ENCODE measurements at regions of chr1 and their contacts with region 1.

Region 1: DNA sequence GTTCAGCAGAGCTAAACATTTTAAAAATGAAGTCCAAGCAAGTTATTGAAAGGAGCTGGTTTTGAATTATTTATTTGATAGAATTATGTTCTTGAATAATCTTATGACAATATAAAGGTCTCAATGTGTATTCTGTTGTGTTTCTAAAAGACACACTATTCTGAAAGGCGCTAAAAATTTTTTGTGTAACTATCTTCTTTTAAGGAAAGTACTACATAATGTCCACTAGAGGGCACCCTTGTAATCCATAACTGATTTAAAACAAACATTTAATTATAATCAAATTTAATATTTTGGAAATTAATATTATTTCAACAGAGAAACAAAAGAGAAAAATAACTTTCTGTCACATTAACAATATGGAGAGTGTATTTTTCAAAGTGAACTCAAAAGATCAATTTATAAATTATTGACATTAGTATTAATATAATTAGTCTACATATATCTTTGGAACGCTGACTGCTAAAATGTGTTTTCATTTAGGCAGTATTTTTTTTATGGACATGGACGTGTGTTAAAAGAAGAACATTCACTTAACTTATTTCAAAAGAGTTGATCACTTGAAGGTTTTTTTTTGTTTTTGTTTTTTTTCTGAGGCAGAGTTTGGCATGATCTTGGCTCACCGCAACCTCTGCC is 248.4 kb downstream of the DENND1B start:
- DNase-seq: peak in 2 of 9 experiments; percentile 41 to 60
- ATAC-seq: no peak
- H3K4me3 ChIP-seq: no peak overlapping the region
- H3K4me3 Mint-ChIP-seq: no peak overlapping the region
- H3K27ac ChIP-seq: no peak overlapping the region
- H3K27ac Mint-ChIP-seq: no peak overlapping the region
- H3K4me1 ChIP-seq: no peaks in the 10 kb centered on the region
- H3K4me1 Mint-ChIP-seq: no peaks in the 10 kb centered on the region
- H3K27me3 ChIP-seq: no peaks in the 10 kb centered on the region
- H3K27me3 Mint-ChIP-seq: no peaks in the 10 kb centered on the region
- CTCF ChIP-seq: peak; percentile 97

Region 2: GRCh38 chr1:197268012-197268411 is 258.8 kb before region 1 on chr1 and contains the start of gene CRB1:
- CTCF ChIA-PET with region 1: no interaction called
- POLR2A ChIA-PET with region 1: no interaction called
- intact Hi-C with region 1: no loop called
- DNase-seq: peak in 1 of 9 experiments; percentile 2
- ATAC-seq: no peak
- H3K4me3 ChIP-seq: no peak within 1 kb of the TSS
- H3K4me3 Mint-ChIP-seq: no peak within 1 kb of the TSS
- H3K27ac ChIP-seq: no peak within 1 kb of the TSS
- H3K27ac Mint-ChIP-seq: no peak within 1 kb of the TSS
- H3K4me1 ChIP-seq: no peaks in the 10 kb centered on the region
- H3K4me1 Mint-ChIP-seq: no peaks in the 10 kb centered on the region
- H3K27me3 ChIP-seq: no peaks in the 10 kb centered on the region
- H3K27me3 Mint-ChIP-seq: peaks cover 2% of the 10 kb centered on the region
- CTCF ChIP-seq: no peak
- total RNA-seq, gene CRB1: 0.81 TPM in 1 of 2 experiments, not detected in the other

Region 3: DNA sequence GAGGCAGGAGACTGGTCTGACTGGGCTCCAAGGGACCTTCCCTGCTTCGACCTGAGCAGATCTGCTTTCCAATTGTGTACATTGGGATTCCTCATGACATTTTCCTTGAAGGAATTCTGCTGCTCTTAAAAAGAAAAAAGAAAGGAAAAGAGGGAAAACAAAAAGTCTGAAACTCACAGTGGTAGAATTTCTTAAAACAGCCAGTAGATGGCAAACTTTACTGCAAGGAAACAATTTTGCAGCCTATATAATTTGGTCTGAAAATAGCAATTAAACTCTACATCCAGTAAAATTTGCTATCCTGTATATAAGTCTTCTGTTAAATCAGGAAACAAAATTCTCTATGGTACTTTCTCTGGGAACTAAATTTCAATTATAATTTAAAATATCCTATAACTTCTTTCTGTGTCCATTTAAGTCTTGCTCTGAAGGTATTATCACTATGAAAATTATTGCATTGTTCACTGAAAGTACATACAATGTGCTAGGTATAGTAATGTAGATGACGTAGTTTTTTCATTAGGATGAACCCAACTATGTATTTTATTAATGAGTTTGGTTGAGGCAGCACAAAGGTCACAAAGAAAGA is 199.0 kb before region 1 on chr1:
- CTCF ChIA-PET with region 1: no interaction called
- POLR2A ChIA-PET with region 1: no interaction called
- intact Hi-C with region 1: loop called in 1 of 2 experiments (anchors 5 kb)
- DNase-seq: peak in 2 of 9 experiments; percentile 2 to 10
- ATAC-seq: no peak
- H3K4me3 ChIP-seq: no peak overlapping the region
- H3K4me3 Mint-ChIP-seq: no peak overlapping the region
- H3K27ac ChIP-seq: no peak overlapping the region
- H3K27ac Mint-ChIP-seq: no peak overlapping the region
- H3K4me1 ChIP-seq: no peaks in the 10 kb centered on the region
- H3K4me1 Mint-ChIP-seq: no peaks in the 10 kb centered on the region
- H3K27me3 ChIP-seq: no peaks in the 10 kb centered on the region
- H3K27me3 Mint-ChIP-seq: no peaks in the 10 kb centered on the region
- CTCF ChIP-seq: peak; percentile 64

Region 4: GRCh38 chr1:197541411-197541810 is 14.6 kb after region 1 on chr1:
- CTCF ChIA-PET with region 1: interaction called, 11 read pairs
- POLR2A ChIA-PET with region 1: no interaction called
- intact Hi-C with region 1: no loop called
- DNase-seq: no peak
- ATAC-seq: no peak
- H3K4me3 ChIP-seq: no peak overlapping the region
- H3K4me3 Mint-ChIP-seq: no peak overlapping the region
- H3K27ac ChIP-seq: no peak overlapping the region
- H3K27ac Mint-ChIP-seq: no peak overlapping the region
- H3K4me1 ChIP-seq: no peaks in the 10 kb centered on the region
- H3K4me1 Mint-ChIP-seq: no peaks in the 10 kb centered on the region
- H3K27me3 ChIP-seq: no peaks in the 10 kb centered on the region
- H3K27me3 Mint-ChIP-seq: no peaks in the 10 kb centered on the region
- CTCF ChIP-seq: no peak

Region 5: DNA sequence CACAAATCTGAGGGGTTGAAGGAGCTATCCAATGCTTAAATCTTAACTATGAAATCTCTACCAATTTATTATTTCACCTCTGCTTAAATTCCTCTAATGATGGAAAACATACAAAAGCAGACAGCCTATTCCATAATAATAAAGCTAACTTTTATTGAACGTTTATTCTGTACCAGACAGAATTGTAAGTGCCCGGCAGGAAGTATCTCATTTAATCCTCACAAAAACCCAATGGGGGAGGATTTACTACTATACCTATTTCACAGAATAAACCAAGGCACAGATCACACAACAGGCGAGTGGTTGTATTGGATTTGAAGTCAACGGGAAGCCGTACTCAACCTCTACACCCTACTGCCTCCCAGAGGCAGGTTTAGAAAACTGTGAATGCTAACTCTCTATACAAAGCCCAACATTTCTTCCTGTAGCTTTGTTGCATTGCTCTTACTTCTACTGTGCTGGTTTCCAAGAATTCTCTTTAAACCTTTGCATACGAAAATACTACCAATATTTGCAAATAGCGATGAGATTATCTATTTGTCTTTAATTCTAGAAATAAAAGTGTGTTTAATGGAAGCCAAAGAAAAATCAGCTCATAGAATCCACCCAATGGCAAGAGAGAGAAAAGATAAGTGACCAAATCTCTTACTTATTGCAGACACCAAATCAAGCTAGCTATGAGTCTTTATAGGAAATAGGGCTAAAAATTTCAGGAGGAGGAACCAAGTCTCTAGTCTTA is 342.1 kb after region 1 on chr1:
- CTCF ChIA-PET with region 1: interaction called, 22 read pairs
- POLR2A ChIA-PET with region 1: no interaction called
- intact Hi-C with region 1: loop called (anchors 1 to 5 kb)
- DNase-seq: peak in 6 of 9 experiments; percentile 2 to 66 (median 30)
- ATAC-seq: peak; percentile 91
- H3K4me3 ChIP-seq: no peak overlapping the region
- H3K4me3 Mint-ChIP-seq: no peak overlapping the region
- H3K27ac ChIP-seq: no peak overlapping the region
- H3K27ac Mint-ChIP-seq: no peak overlapping the region
- H3K4me1 ChIP-seq: no peaks in the 10 kb centered on the region
- H3K4me1 Mint-ChIP-seq: no peaks in the 10 kb centered on the region
- H3K27me3 ChIP-seq: no peaks in the 10 kb centered on the region
- H3K27me3 Mint-ChIP-seq: peaks cover 6% of the 10 kb centered on the region
- CTCF ChIP-seq: peak; percentile 79

Region 6: GRCh38 chr1:198465201-198466144 is 938.6 kb after region 1 on chr1:
- CTCF ChIA-PET with region 1: interaction called, 4 read pairs
- POLR2A ChIA-PET with region 1: no interaction called
- intact Hi-C with region 1: loop called in 1 of 2 experiments (anchors 1 kb)
- DNase-seq: peak in 2 of 9 experiments; percentile 52 to 64
- ATAC-seq: peak; percentile 58
- H3K4me3 ChIP-seq: no peak overlapping the region
- H3K4me3 Mint-ChIP-seq: no peak overlapping the region
- H3K27ac ChIP-seq: no peak overlapping the region
- H3K27ac Mint-ChIP-seq: no peak overlapping the region
- H3K4me1 ChIP-seq: no peaks in the 10 kb centered on the region
- H3K4me1 Mint-ChIP-seq: peaks cover 3% of the 10 kb centered on the region
- H3K27me3 ChIP-seq: no peaks in the 10 kb centered on the region
- H3K27me3 Mint-ChIP-seq: no peaks in the 10 kb centered on the region
- CTCF ChIP-seq: peak; percentile 75